ENCODE measurements at regions of chr22 and their contacts with region 1.

Region 1: DNA sequence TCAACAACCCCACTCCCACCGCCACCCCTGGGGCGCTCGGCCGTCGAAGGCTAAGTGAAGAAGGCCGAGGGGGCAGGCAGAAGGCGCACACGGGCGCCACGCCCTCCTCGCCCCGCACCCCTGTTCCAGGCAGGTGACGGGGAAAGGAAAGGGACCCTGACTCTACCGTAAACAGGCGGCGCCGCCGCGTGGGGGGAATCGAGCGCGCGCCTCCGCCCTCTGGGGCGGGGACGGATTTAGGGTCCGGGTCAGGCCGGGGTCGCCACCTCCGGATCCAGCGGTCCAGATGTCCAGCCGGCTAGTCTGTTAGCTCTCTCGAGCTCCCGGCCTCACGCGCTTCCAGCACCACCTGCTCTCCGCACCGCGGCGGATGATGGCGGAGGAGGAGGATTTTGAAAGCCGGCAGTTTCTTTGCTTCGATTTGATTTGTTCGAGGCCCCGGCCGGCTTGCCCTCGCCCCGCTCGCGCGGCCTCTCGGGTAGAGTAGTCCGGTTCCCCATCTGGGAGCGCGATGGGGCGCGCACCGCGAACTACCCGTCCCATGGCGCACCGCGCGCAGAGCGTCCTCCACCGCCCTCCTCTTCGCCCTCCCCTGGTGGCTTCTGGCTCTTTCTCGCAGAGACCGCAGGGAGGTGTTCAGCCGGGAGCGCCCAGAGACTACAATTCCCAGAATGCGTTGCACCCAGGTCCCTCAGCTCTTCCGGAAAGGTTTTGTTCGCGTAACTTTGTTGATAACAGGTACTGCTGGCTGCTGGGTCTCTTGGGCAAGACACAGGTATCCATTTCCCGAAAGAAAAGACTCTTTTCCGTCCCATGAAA is at the start of gene RANGAP1:
- DNase-seq: peak; percentile 99
- H3K4me3 Mint-ChIP-seq: peak within 1 kb of the TSS; percentile 93
- H3K27ac Mint-ChIP-seq: peak within 1 kb of the TSS; percentile 96
- H3K4me1 Mint-ChIP-seq: peaks cover 30% of the 10 kb centered on the region
- H3K27me3 Mint-ChIP-seq: no peaks in the 10 kb centered on the region
- total RNA-seq, gene RANGAP1: 189 and 192 TPM in 2 replicates

Region 2: DNA sequence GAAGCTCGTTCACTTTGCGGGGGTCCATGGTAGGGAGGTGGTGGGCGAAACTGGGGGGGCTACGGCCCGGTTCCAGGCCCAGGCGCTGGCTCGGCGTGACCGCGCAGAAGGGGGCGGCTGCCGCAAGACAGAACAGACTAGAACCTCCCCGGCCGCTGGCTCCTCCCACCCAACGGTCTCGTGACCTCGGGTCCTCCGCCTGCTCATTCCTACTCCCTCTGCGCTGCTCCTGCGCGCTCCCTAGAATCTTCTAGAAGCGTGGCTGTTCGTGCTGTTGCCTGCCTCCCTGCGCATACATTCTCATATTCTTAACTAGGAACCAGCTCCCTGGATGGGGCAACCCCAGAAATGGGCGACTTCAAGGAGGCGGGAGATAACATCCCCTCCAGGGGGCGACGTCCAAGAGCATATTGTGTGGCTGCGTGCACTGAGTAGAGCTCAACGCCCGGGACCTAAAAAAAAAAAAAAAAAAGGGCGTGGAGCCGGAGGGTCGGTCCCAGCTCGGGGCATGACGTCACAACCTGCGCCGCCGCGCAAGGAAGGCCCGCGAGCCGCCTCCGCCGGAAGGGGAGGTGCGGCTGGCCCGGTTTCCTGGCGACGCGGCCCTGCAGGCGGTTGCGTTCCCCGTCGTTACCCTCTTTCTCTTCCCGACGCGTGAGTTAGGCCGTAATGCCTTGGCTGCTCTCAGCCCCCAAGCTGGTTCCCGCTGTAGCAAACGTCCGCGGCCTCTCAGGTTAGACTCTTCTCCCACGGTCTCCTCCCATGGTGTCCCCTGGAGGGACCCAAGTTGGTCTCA is 429.3 kb before region 1 on chr22 and contains the starts of genes ST13 and XPNPEP3:
- intact Hi-C with region 1: loop called (anchors 2 kb)
- DNase-seq: peak; percentile 96
- H3K4me3 Mint-ChIP-seq: peak within 1 kb of the TSS; percentile 96
- H3K27ac Mint-ChIP-seq: peak within 1 kb of the TSS; percentile 100
- H3K4me1 Mint-ChIP-seq: peaks cover 38% of the 10 kb centered on the region
- H3K27me3 Mint-ChIP-seq: no peaks in the 10 kb centered on the region
- total RNA-seq, gene ST13: 194 and 201 TPM in 2 replicates
- total RNA-seq, gene XPNPEP3: 17.5 and 17.9 TPM in 2 replicates

Region 3: DNA sequence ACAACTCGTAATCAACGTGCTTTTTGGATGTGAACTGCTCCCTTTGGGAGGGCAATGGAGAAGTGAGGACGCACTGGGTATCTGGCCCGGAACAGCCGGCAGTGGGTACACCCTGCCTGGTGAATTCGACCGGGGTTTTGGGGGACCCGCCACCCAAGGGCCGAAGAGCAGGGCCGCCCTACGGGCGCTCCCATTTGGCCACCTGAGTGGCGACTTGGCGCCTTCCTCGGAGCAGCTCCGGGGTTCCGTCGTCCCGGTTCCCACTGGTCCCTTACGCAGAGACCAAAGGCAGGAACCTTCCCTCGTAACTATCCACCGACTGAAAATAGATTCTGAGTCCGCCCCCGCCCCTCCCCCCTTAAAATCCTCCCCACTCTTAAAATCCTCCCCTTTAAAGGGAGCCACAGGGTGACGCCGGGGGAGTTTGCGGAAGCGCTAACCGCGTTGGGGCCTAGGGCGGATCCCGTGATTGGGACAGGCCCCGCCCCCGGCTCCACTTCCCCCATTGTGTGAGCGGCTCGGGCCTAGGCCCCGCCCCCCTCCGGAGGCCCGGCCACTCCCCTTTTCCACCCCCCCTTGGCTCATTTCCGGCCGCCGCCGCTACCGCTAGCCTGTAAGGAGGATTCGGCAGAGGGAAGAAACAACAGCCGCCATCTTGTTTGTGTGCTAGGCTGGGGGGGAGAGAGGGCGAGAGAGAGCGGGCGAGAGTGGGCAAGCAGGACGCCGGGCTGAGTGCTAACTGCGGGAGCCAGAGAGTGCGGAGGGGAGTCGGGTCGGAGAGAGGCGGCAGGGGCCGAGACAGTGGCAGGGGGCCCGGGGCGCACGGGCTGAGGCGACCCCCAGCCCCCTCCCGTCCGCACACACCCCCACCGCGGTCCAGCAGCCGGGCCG is 194.7 kb before region 1 on chr22:
- intact Hi-C with region 1: loop called (anchors 5 kb)
- DNase-seq: peak; percentile 98
- H3K4me3 Mint-ChIP-seq: peak overlapping the region; percentile 96
- H3K27ac Mint-ChIP-seq: peak overlapping the region; percentile 100
- H3K4me1 Mint-ChIP-seq: peaks cover 27% of the 10 kb centered on the region
- H3K27me3 Mint-ChIP-seq: no peaks in the 10 kb centered on the region

Region 4: GRCh38 chr22:41204992-41205900 is 80.8 kb before region 1 on chr22 and contains the start of gene L3MBTL2:
- intact Hi-C with region 1: loop called (anchors 1 kb)
- DNase-seq: peak; percentile 98
- H3K4me3 Mint-ChIP-seq: peak within 1 kb of the TSS; percentile 85
- H3K27ac Mint-ChIP-seq: peak within 1 kb of the TSS; percentile 83
- H3K4me1 Mint-ChIP-seq: peaks cover 12% of the 10 kb centered on the region
- H3K27me3 Mint-ChIP-seq: peaks cover 15% of the 10 kb centered on the region
- total RNA-seq, gene L3MBTL2: 39.3 and 42.2 TPM in 2 replicates

Region 5: DNA sequence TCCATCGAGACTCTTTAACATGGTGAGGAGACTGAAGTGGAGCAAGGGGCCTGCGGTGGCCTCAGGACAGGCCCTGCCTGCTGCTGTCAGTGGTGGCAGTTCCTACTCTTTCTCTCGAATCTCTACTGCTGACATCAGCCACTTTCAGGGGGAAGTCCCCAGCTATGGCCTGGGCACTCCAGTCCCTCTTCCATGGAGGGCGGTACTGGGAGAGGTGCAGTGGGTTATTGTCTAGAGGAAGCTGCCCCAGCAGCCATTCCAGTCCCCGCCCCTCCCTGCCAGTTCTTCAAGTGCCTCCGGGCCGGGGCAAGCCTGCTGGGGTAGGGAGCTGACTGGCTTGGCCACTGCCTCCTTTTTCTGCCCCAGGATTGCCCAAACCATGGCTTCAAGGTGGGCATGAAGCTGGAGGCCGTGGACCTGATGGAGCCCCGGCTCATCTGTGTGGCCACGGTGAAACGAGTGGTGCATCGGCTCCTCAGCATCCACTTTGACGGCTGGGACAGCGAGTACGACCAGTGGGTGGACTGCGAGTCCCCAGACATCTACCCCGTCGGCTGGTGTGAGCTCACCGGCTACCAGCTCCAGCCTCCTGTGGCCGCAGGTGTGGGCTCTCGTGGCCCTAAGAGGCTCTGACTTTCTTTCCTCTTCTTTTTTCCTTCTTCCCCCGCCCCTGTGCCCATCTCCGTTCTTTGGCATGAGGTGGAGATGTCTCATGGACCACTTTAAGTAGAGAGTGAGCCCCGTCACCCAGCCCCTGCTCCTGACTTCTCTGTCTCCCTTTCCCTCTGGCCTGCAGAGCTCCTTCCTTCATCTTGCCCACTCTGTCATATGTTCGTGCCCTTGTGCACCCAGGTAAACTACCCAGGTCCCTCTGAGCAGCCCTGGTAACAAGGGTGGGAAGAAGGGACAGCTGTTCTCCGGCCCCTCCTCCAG is 59.0 kb before region 1 on chr22:
- intact Hi-C with region 1: no loop called
- DNase-seq: no peak
- H3K4me3 Mint-ChIP-seq: no peak overlapping the region
- H3K27ac Mint-ChIP-seq: no peak overlapping the region
- H3K4me1 Mint-ChIP-seq: no peaks in the 10 kb centered on the region
- H3K27me3 Mint-ChIP-seq: no peaks in the 10 kb centered on the region

Region 6: GRCh38 chr22:41237707-41238569 is 48.1 kb before region 1 on chr22:
- intact Hi-C with region 1: no loop called
- DNase-seq: peak; percentile 77
- H3K4me3 Mint-ChIP-seq: no peak overlapping the region
- H3K27ac Mint-ChIP-seq: no peak overlapping the region
- H3K4me1 Mint-ChIP-seq: peaks cover 3% of the 10 kb centered on the region
- H3K27me3 Mint-ChIP-seq: peaks cover 2% of the 10 kb centered on the region

Region 7: DNA sequence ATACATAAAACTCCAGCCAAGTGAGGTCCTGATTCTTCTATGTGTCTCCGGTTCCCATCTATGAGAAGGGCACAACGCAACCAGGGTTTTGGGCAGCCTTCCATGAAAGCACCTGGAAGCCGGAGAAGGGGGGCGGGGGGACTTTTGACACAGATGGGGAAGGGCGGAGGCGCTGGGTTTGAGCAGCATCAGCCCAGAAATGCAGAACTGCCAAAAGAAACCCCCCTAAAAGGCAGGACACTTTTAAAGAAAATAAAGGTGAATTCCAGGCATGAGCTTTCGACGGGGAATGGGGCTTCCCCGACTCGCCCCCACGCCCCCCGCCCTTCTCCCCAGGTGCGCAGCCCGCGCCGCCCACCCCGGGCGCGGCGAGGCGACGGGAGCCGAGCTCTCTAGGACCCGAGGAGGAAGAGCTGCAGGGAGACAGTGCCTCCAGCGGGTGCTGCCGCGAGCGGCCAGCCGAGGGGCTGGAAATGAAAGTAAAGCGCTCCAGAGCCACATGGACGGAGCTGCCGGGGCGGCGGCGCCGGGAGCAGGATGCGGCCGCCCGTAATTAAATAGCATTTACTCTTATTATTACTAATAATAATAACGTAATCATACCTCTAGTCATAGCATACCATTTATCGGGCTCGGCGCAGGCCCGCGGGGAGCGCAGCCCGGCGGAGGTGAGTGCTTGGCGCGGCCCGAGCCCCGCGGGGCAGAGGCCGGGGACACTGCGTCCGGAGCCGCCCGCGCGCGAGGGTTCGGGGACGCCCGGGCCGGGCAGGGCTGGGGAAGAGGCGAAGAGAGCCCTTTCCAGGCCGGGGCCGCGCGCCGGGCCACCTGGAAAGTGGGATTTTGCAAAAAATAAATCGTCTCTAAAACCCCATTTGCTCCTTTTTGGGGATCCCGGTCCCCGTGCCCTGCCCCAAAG is 15.3 kb after region 1 on chr22 and contains the start of gene ZC3H7B:
- intact Hi-C with region 1: loop called (anchors 1 kb)
- DNase-seq: peak; percentile 79
- H3K4me3 Mint-ChIP-seq: peak within 1 kb of the TSS; percentile 76
- H3K27ac Mint-ChIP-seq: peak within 1 kb of the TSS; percentile 70
- H3K4me1 Mint-ChIP-seq: peaks cover 27% of the 10 kb centered on the region
- H3K27me3 Mint-ChIP-seq: no peaks in the 10 kb centered on the region
- total RNA-seq, gene ZC3H7B: 64.7 and 66.0 TPM in 2 replicates

Region 8: DNA sequence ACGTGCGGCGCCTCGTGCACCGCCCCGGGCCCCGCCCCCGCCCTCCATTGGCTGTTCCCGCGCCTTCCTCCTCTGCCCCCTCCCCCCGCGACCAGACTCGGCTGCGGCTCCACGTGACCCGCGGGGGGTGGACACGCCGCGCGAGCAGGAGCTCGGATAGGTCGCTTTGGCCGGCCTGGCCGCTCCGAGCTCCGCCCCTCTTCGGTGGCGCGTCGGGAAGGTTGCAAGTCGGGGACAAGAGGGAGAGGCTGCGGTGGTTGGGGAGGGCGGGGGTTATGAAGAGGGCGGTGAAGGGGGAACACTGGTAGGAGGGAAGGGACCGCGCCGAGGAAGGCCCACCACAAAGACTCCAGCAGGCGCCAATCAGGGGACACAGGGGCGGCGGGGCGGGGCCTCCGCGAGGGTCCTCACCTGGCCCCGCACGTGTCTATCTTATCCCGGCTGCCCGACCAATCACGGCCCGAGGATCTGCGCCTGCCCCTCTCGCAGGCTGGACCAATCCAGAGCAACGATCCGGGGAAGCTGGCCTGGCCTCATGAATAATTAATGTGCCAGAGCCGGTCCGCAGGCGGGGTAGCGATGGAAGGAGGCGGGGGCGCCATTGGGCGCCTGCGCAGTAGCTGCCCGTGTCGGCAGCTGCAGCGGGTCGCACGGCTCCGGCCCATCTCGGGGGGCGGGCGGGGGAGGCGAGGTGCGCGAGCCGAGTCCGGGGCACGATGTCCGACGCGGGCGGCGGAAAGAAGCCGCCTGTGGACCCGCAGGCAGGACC is 95.5 kb after region 1 on chr22 and contains the start of gene TEF:
- intact Hi-C with region 1: loop called (anchors 2 kb)
- DNase-seq: peak; percentile 97
- H3K4me3 Mint-ChIP-seq: peak within 1 kb of the TSS; percentile 87
- H3K27ac Mint-ChIP-seq: peak within 1 kb of the TSS; percentile 91
- H3K4me1 Mint-ChIP-seq: peaks cover 6% of the 10 kb centered on the region
- H3K27me3 Mint-ChIP-seq: peaks cover 4% of the 10 kb centered on the region
- total RNA-seq, gene TEF: 1.7 and 1.9 TPM in 2 replicates

Region 9: GRCh38 chr22:41448189-41448808 is 162.3 kb after region 1 on chr22:
- intact Hi-C with region 1: loop called (anchors 1 kb)
- DNase-seq: peak; percentile 91
- H3K4me3 Mint-ChIP-seq: peak overlapping the region; percentile 96
- H3K27ac Mint-ChIP-seq: peak overlapping the region; percentile 98
- H3K4me1 Mint-ChIP-seq: peaks cover 6% of the 10 kb centered on the region
- H3K27me3 Mint-ChIP-seq: no peaks in the 10 kb centered on the region